Left cardiac atrium (tissue), 4 donors: ENCODE measurements at regions of chr1 and their contacts with region 1.

Region 1: DNA sequence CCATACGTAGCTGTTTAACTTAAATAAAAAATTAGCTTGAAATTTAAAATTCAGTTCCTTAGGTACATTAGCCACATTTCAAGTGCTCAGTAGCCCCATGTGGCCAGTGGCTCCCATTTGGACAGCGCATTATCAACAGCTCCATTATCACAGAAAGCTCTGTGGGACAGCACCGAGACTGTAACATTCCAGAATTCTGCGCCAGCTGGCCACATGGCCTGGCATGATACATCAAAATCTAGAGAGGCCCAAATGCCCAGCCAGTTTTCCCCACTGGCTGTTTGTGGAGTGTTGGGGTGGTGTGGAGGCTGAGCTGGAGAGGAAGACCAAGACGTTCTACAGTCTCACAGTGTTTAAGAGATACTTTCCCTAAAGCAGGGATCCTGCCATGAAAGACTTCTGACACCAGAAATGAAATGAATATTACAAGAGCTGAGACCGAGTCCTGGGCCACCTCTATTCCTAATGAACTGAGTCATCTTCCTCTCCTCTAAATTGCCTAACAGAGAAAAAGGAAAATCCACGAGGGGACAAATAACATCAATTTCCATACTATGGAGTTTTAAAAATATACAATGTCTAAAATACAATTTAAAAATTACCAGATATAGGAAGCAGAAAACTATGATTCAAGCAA is 27.3 kb upstream of the ACTA1 start:
- DNase-seq: peak; percentile 45
- ATAC-seq: peak; percentile 83 to 94

Region 2: GRCh38 chr1:229408458-229409037 is 52.6 kb before region 1 on chr1:
- intact Hi-C with region 1: loop called in 1 of 2 experiments (anchors 5 kb)
- DNase-seq: peak; percentile 61
- ATAC-seq: peak; percentile 77 to 79

Region 3: GRCh38 chr1:229614701-229615100 is 153.6 kb after region 1 on chr1:
- intact Hi-C with region 1: no loop called
- DNase-seq: no peak
- ATAC-seq: no peak